Dorsolateral prefrontal cortex (tissue), 120 donors: ENCODE measurements at regions of chr19 and their contacts with region 1.

Region 1: DNA sequence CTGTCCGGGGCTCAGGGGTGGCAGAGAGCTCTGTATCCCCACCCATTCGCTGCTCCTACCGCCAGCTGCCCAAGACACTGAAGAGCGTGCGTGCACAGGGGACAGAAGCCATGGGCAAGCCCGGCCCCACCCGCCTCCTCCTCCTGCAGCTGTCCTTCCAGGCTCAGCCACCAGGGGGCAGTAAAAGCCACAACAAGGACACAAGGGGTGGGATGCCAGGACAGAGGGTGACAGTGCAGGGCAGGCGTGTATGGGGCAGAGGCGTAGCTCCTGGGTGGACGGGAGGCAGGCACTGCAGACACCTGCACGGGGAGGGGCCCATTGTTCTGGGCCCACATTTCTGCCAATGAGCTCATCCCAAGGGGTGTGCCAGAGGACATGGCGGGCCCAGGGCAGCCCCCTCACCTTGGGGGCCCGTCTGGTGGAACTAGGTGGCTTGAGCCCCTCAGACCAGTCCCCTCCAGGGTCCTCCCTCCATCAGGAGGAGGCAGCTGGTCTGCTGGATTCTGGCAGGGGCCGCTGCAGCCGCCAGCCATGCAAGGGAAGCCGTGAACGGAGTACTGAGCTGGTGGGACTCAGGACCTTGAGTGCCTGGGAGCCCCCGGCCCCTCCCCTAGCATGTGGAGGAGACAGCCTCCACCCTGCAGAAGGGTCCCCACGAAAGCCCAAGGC is 61.1 kb downstream of the MLLT1 start:
- DNase-seq: peak; percentile 88 to 95 (median 91)
- H3K4me3 ChIP-seq: peak overlapping the region in 2 of 59 donors; percentile 3 to 5
- H3K27ac ChIP-seq: peak overlapping the region in 39 of 59 donors; percentile 6 to 91 (median 41)
- H3K27me3 ChIP-seq: no peaks in the 10 kb centered on the region
- CTCF ChIP-seq: peak; percentile 91 to 100 (median 99)

Region 2: GRCh38 chr19:6201996-6202395 is 16.6 kb before region 1 on chr19:
- intact Hi-C with region 1: no loop called
- DNase-seq: no peak
- H3K4me3 ChIP-seq: no peak overlapping the region
- H3K27ac ChIP-seq: peak overlapping the region in 5 of 59 donors; percentile 5 to 39 (median 31)
- H3K27me3 ChIP-seq: no peaks in the 10 kb centered on the region
- CTCF ChIP-seq: no peak

Region 3: GRCh38 chr19:6273701-6274601 is 55.3 kb after region 1 on chr19:
- intact Hi-C with region 1: loop called (anchors 2 to 5 kb)
- DNase-seq: peak in 8 of 10 donors; percentile 44 to 78 (median 62)
- H3K4me3 ChIP-seq: peak overlapping the region in 50 of 59 donors; percentile 4 to 54 (median 29)
- H3K27ac ChIP-seq: peak overlapping the region in 57 of 59 donors; percentile 35 to 91 (median 80)
- H3K27me3 ChIP-seq: no peaks in the 10 kb centered on the region
- CTCF ChIP-seq: peak in 2 of 56 donors; percentile 8 to 13

Region 4: DNA sequence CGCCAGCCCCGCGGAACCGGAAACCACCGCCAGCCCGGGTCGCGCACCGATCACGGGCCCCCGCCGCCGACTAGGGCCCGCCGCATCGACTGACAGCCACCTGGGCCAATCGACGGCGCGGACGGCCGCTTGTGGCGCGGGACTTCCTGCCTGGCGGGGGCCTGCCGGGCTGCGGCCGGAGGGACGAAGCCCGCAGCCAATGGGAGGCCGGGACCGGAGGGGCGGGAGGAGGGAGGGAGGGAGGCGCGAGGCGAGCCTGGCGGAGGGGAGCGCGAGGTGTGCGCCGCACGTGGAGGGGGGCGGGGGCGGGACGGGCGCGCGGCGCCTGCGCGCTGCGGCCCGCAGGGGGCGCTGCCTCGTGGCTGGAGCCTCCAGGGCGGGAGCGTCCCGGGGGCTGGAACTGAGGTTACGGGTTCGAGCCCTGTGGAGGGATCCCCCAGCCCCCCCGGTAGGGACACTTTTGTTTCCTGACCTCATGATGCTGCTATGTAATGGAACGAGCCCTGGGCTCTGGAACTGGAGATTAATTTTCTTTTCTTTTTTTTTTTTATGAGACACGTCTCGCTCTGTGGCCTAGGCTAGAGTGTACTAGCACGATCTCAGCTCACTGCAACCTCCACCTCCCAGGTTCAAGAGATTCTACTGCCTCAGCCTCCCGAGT is 61.4 kb after region 1 on chr19 and contains the start of gene MLLT1:
- intact Hi-C with region 1: loop called in 1 of 2 experiments (anchors 2 kb)
- DNase-seq: peak; percentile 94 to 99 (median 97)
- H3K4me3 ChIP-seq: peak within 1 kb of the TSS; percentile 44 to 95 (median 81)
- H3K27ac ChIP-seq: peak within 1 kb of the TSS in 55 of 59 donors; percentile 1 to 87 (median 71)
- H3K27me3 ChIP-seq: no peaks in the 10 kb centered on the region
- CTCF ChIP-seq: peak; percentile 39 to 95 (median 80)
- total RNA-seq, gene MLLT1: 67.9 to 201 (median 99.1) TPM

Region 5: GRCh38 chr19:6297202-6297601 is 78.6 kb after region 1 on chr19:
- intact Hi-C with region 1: loop called (anchors 1 to 2 kb)
- DNase-seq: no peak
- H3K4me3 ChIP-seq: no peak overlapping the region
- H3K27ac ChIP-seq: no peak overlapping the region
- H3K27me3 ChIP-seq: peaks cover 0 to 4% (median 0%) of the 10 kb centered on the region in 45 donors
- CTCF ChIP-seq: no peak

Region 6: GRCh38 chr19:6354098-6354674 is 135.6 kb after region 1 on chr19:
- intact Hi-C with region 1: loop called in 1 of 2 experiments (anchors 5 kb)
- DNase-seq: no peak
- H3K4me3 ChIP-seq: no peak overlapping the region
- H3K27ac ChIP-seq: no peak overlapping the region
- H3K27me3 ChIP-seq: no peaks in the 10 kb centered on the region
- CTCF ChIP-seq: peak in 53 of 56 donors; percentile 19 to 66 (median 41)

Region 7: DNA sequence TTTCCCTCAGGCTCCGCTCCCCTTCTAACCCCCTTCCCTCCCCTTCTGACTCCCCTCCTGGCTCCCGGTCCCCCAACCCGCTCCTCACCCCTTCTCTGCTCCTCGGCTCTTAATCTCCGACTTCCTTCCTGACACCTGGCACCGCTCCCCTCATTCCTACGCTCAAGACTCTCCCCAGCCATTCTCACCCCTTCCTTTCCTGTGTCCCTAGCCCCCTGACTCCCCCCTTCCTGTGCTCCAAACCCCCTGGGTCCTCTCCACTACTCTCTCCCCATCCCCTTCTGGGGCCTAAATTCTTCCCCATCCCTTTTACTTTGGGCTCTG is 143.4 kb after region 1 on chr19:
- intact Hi-C with region 1: loop called (anchors 5 to 10 kb)
- DNase-seq: no peak
- H3K4me3 ChIP-seq: peak overlapping the region; percentile 70 to 98 (median 90)
- H3K27ac ChIP-seq: peak overlapping the region; percentile 54 to 96 (median 91)
- H3K27me3 ChIP-seq: no peaks in the 10 kb centered on the region
- CTCF ChIP-seq: no peak

Region 8: GRCh38 chr19:6372594-6373095 is 154.0 kb after region 1 on chr19 and contains the start of gene ALKBH7:
- intact Hi-C with region 1: loop called (anchors 5 to 10 kb)
- DNase-seq: peak; percentile 87 to 100 (median 99)
- H3K4me3 ChIP-seq: peak within 1 kb of the TSS; percentile 65 to 99 (median 93)
- H3K27ac ChIP-seq: peak within 1 kb of the TSS; percentile 45 to 100 (median 97)
- H3K27me3 ChIP-seq: no peaks in the 10 kb centered on the region
- CTCF ChIP-seq: peak in 31 of 56 donors; percentile 2 to 61 (median 32)
- total RNA-seq, gene ALKBH7: 39.9 to 75.3 (median 52.4) TPM